ENCODE measurements at regions of chr10 and their contacts with region 1.

Region 1: DNA sequence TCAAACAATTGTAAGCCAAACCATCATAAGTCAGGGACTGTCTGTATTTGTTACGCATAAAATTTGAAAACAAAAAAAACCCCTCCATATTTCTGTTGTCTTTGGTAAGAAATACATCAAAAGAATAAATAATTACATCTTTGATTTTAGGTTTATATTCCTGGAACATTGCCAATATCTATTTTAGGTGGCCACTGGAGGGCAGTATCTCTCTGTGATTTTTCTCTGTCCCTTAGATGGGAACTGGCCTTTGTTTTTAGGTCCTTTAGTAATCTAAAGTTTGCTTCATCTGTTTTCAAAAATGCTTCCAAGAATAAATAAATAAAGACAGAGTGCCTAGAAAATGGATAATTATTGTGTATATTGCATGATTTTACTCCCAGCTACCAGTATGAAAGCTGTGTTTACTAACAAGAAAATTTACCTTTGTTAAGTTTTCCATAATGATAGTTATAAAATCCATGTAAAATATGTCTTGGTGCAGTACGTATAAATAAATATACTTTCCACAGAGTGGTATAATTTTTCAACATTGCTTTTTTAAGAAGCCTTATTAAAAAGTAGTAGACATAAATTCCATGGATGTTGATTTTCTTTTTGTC is 64.2 kb downstream of the PHYHIPL start:
- DNase-seq: no peak
- H3K4me3 ChIP-seq: no peak overlapping the region
- H3K27ac ChIP-seq: peak overlapping the region in 57 of 59 donors; percentile 7 to 84 (median 68)
- H3K27me3 ChIP-seq: no peaks in the 10 kb centered on the region
- CTCF ChIP-seq: peak; percentile 63 to 95 (median 82)

Region 2: GRCh38 chr10:59290448-59290847 is 49.8 kb after region 1 on chr10:
- intact Hi-C with region 1: no loop called
- DNase-seq: no peak
- H3K4me3 ChIP-seq: no peak overlapping the region
- H3K27ac ChIP-seq: peak overlapping the region in 58 of 59 donors; percentile 29 to 98 (median 92)
- H3K27me3 ChIP-seq: no peaks in the 10 kb centered on the region
- CTCF ChIP-seq: peak in 33 of 56 donors; percentile 11 to 51 (median 30)

Region 3: DNA sequence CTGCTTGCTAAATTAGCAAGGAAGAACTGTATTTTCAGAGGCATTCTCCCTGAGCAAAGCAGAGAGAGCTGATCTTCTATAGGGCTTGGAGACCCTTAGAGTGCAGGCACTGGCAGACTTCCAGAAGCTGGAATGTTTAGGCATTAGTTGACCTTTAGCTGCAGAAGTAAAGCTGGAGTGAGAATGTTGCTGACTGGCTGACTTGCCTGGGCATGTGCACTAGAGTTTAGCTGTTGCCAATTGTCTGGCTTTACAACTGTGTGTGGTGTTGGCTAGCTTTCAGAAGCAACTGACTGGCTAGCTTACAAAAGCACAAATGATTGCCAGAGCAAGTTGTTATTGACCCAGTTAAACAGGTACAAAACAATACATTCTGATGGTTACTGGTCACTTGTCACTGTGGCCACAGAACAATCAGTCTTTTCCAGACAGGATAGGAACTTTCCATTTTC is 96.5 kb after region 1 on chr10:
- intact Hi-C with region 1: loop called in 1 of 2 experiments (anchors 5 kb)
- DNase-seq: peak in 7 of 10 donors; percentile 48 to 71 (median 57)
- H3K4me3 ChIP-seq: no peak overlapping the region
- H3K27ac ChIP-seq: peak overlapping the region; percentile 68 to 100 (median 97)
- H3K27me3 ChIP-seq: no peaks in the 10 kb centered on the region
- CTCF ChIP-seq: no peak

Region 4: DNA sequence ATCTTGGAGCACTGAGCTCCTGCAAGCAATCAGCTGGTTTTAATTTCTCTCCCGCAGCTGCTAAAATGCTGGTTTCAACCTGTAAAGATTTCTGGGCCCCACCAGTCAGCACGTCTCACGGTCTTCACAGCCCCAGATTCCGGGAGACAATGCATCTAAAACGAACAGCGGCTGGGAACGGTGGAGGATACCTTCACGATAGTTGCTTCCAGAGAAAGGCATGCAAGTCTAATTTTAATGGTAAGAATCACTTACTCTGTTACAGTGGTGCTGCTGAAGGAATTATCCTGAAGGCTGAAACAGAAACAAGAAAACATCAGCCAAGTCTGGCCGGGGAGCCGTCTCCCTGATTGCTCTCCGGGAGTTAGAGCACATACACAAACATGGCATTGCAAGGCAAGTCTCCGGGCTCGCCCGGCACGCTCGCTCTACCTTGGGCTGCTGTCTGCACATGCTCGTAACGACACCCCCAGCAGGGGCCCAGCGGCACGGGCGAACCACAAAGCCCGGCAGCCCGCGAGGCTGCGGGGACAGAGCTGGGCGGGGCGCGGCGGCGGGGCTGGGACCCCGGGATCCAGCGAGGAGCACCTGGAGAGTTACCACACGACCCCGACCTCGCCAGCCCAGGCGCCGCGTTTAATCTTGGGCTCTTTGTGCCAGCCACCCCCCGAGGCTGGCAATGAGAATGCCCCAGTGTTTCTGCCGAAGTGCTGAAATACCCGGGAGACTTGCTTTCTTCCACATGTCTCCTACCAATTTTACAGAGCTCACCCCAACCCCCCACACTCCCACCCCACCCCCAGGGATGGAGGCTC is 121.7 kb after region 1 on chr10 and contains the start of gene FAM13C:
- intact Hi-C with region 1: loop called (anchors 5 kb)
- DNase-seq: peak; percentile 71 to 87 (median 83)
- H3K4me3 ChIP-seq: peak within 1 kb of the TSS; percentile 48 to 87 (median 74)
- H3K27ac ChIP-seq: peak within 1 kb of the TSS; percentile 92 to 99 (median 98)
- H3K27me3 ChIP-seq: no peaks in the 10 kb centered on the region
- CTCF ChIP-seq: peak in 14 of 56 donors; percentile 6 to 38 (median 14)
- total RNA-seq, gene FAM13C: 54.6 to 219 (median 93.7) TPM

Region 5: DNA sequence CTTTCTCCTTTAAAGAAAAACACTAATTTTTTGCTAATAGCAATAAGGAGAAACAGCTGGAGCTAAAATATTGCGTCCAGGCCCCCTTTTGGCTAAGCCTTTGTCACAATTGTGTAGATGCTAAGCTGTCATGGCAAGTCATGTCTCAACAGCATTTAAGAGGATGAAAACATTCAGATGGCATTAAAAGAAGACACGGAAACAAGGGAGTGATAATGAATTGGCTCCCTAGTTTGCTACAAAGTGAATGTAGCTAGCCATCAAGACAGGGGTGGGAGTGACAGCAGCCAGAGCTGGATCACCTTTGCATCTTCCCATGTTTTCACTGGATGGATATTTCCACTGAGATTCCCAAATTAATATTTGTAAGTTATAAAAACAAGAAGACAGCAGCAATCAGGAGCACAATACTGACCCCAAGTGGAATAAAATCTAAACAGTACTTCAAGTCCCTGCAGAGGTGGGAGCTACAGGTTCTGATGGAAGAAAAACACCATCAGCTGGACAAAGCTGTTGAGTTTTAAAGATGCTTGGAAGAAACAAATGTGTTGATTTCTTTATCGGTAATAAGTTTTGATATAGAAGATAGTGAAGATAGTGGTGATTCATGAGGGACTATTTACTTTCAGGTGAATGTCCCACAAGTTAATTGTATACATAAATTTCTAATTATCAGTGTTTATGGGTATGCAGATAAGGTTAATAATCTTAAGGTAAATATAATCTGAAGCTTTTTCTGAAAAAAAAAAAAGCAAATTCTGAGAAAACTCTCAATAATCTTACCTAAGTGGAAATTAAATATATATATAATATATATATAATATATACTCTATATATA is 339.6 kb after region 1 on chr10:
- intact Hi-C with region 1: loop called (anchors 2 to 5 kb)
- DNase-seq: no peak
- H3K4me3 ChIP-seq: peak overlapping the region in 1 of 59 donors; percentile 22
- H3K27ac ChIP-seq: peak overlapping the region in 33 of 59 donors; percentile 2 to 81 (median 46)
- H3K27me3 ChIP-seq: no peaks in the 10 kb centered on the region
- CTCF ChIP-seq: peak; percentile 35 to 86 (median 72)